BJ (cell line): ENCODE measurements at regions of chr15 and their contacts with region 1.

Region 1: DNA sequence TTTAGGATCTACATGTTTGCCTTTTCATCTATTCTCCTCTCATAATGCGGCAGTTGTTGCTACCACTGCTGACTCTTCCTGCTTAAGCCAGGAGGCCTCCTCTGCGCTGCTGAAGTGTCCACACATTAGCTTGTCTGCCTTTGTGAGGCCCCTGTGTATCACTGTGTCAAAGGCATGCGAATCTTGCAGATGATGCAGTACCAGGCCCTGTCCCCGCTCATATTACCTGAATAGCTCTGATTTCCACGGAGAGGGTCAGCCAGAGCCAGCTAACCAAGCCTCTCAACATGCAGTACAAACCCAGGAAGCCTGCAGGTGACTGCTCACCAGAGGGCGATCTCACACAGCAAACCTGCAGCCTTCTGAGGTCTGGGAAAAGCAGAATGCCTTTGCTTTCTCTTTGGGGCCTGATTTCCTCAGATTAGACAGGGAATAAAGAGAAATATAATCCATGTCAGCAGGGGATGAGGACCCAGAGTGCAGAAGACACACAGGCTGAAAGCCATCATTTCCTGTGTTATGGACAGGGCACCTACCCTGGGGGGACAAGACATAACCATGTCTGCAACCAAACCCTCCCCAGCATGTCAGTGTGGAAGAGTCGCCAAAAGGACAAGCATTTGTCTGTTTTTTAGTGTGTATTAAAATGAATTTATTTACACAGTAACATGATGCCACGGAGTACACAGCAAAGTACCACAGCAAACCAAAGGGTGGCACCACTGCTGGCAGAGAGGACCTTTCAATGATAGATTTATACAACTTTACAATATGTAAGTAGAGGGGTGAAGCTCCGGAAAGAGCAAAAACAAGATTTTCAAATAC is 36.8 kb upstream of the TSPAN3 start:
- DNase-seq: no peak
- H3K4me3 ChIP-seq: no peak overlapping the region
- H3K27me3 ChIP-seq: no peaks in the 10 kb centered on the region
- CTCF ChIP-seq: peak; percentile 78

Region 2: DNA sequence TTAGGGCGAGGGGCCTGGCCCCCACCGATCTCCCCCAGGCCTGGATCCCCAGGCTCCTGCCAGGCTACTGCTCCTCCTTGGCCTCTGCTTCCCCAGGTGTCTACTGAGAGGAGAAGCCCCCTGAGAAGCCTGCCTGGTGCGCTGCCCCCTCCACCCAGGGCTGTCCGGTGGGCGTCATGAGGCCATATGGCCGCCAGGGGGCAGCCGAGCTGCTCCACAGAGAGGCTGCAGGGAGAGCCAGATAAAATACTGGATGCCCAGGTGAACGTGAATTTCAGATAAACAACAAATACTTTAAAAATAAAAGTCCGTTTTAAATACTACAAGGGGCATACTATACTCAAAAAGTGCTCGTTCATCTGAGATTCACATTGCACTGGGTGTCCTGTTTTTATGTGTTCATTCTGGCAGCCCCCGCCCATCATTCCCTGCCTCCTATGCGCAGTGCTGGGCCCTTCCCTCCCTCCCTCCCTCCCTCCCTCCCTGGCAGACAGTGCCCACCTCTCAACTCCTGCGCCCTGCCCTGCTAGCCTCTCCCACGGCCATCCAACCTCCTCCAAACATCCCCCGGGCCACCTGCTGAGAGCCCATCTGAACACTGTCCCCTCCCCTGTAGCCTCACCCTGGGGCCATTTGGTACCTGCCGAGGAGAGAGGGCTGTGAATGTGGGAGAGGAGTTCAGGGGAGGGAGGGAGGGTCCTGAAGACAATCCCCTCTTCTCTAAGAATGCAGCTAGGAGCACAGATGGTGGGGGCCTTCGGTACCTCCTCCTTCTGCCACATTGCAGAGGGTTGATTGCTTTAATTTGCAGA is 83.3 kb before region 1 on chr15:
- CTCF ChIA-PET with region 1: interaction called, 19 read pairs
- POLR2A ChIA-PET with region 1: no interaction called
- DNase-seq: no peak
- H3K4me3 ChIP-seq: no peak overlapping the region
- H3K27me3 ChIP-seq: no peaks in the 10 kb centered on the region
- CTCF ChIP-seq: peak; percentile 96

Region 3: GRCh38 chr15:77034695-77035489 is 72.9 kb before region 1 on chr15:
- CTCF ChIA-PET with region 1: interaction called, 18 read pairs
- POLR2A ChIA-PET with region 1: no interaction called
- DNase-seq: no peak
- H3K4me3 ChIP-seq: no peak overlapping the region
- H3K27me3 ChIP-seq: no peaks in the 10 kb centered on the region
- CTCF ChIP-seq: peak; percentile 72

Region 4: DNA sequence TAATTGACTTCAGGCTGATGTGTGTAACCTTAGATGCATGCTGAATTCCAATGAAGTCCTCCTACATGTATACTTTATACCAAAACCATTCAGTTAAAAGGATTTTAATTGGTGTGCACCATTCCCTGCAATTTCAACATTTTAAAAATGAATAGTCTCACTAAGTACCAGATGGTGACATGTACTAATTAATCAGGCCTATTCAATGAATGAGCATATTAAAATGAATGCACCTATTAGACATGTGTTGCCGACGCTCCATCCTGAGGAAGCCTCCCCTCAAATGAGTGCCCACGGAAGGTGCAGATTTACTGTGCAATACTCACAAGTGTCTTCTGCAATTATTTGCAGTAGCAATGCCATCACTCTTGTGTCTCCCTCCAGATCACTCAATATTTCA is 87.8 kb after region 1 on chr15:
- CTCF ChIA-PET with region 1: no interaction called
- POLR2A ChIA-PET with region 1: no interaction called
- DNase-seq: no peak
- H3K4me3 ChIP-seq: no peak overlapping the region
- H3K27me3 ChIP-seq: no peaks in the 10 kb centered on the region
- CTCF ChIP-seq: no peak